ENCODE measurements at regions of chr6 and their contacts with region 1.

Region 1: GRCh38 chr6:26196846-26197648 is 109.8 kb downstream of the HFE start:
- DNase-seq: peak; percentile 86
- ATAC-seq: peak; percentile 43
- H3K4me3 Mint-ChIP-seq: peak overlapping the region; percentile 98
- H3K27ac Mint-ChIP-seq: peak overlapping the region; percentile 99
- H3K4me1 Mint-ChIP-seq: peaks cover 28% of the 10 kb centered on the region
- H3K27me3 Mint-ChIP-seq: no peaks in the 10 kb centered on the region

Region 2: GRCh38 chr6:26054857-26055669 is 142.0 kb before region 1 on chr6:
- CTCF ChIA-PET with region 1: no interaction called
- POLR2A ChIA-PET with region 1: interaction called, 14 read pairs
- intact Hi-C with region 1: loop called (anchors 2 to 5 kb)
- DNase-seq: peak; percentile 91
- ATAC-seq: peak; percentile 70
- H3K4me3 Mint-ChIP-seq: peak overlapping the region; percentile 96
- H3K27ac Mint-ChIP-seq: peak overlapping the region; percentile 99
- H3K4me1 Mint-ChIP-seq: peaks cover 13% of the 10 kb centered on the region
- H3K27me3 Mint-ChIP-seq: no peaks in the 10 kb centered on the region

Region 3: GRCh38 chr6:26149240-26149639 is 47.8 kb before region 1 on chr6:
- CTCF ChIA-PET with region 1: no interaction called
- POLR2A ChIA-PET with region 1: no interaction called
- intact Hi-C with region 1: no loop called
- DNase-seq: no peak
- ATAC-seq: no peak
- H3K4me3 Mint-ChIP-seq: no peak overlapping the region
- H3K27ac Mint-ChIP-seq: no peak overlapping the region
- H3K4me1 Mint-ChIP-seq: peaks cover 2% of the 10 kb centered on the region
- H3K27me3 Mint-ChIP-seq: no peaks in the 10 kb centered on the region

Region 4: DNA sequence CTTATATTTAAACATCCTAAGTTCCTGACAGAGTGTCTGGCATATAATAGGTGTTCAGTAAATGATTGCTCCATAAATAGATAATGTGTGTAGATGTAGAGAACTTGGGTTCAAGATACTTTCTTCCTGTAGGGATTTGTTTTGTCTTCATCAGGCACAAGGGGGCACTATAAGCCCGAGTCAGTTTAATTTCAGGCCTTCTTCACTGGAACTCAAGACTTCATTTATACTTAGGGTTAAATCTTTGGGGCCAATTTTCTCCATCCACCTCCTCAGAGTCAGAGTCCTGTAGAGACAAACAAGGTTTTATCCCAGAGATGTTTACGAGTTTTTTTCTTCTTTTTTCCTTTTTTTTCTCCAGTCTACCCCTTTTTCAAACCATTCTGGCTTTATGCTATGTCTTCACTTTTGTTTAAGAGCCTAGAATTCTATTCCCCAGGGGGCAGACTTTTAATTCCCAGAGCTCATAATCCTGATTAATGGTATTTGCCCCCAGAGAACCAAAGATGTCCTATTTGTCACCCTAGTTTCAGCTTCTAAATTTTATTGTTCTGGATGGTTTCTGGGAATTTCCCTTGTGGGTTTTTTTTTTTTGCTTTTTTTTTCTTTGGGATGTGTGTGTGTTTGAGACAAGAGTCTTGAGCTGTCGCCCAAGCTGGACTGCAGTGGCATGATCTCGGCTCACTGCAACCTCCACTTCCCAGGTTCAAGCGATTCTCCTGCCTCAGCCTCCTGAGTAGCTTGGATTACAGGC is 21.4 kb before region 1 on chr6:
- CTCF ChIA-PET with region 1: interaction called, 4 read pairs
- POLR2A ChIA-PET with region 1: interaction called, 47 read pairs
- intact Hi-C with region 1: loop called in 1 of 2 experiments (anchors 1 kb)
- DNase-seq: peak; percentile 69
- ATAC-seq: peak; percentile 14
- H3K4me3 Mint-ChIP-seq: peak overlapping the region; percentile 30
- H3K27ac Mint-ChIP-seq: peak overlapping the region; percentile 80
- H3K4me1 Mint-ChIP-seq: peaks cover 33% of the 10 kb centered on the region
- H3K27me3 Mint-ChIP-seq: no peaks in the 10 kb centered on the region

Region 5: GRCh38 chr6:26234421-26235296 is 37.6 kb after region 1 on chr6:
- CTCF ChIA-PET with region 1: interaction called, 4 read pairs
- POLR2A ChIA-PET with region 1: interaction called, 131 read pairs
- intact Hi-C with region 1: loop called (anchors 1 kb)
- DNase-seq: peak; percentile 81
- ATAC-seq: peak; percentile 73
- H3K4me3 Mint-ChIP-seq: peak overlapping the region; percentile 77
- H3K27ac Mint-ChIP-seq: peak overlapping the region; percentile 100
- H3K4me1 Mint-ChIP-seq: peaks cover 31% of the 10 kb centered on the region
- H3K27me3 Mint-ChIP-seq: peaks cover 2% of the 10 kb centered on the region

Region 6: DNA sequence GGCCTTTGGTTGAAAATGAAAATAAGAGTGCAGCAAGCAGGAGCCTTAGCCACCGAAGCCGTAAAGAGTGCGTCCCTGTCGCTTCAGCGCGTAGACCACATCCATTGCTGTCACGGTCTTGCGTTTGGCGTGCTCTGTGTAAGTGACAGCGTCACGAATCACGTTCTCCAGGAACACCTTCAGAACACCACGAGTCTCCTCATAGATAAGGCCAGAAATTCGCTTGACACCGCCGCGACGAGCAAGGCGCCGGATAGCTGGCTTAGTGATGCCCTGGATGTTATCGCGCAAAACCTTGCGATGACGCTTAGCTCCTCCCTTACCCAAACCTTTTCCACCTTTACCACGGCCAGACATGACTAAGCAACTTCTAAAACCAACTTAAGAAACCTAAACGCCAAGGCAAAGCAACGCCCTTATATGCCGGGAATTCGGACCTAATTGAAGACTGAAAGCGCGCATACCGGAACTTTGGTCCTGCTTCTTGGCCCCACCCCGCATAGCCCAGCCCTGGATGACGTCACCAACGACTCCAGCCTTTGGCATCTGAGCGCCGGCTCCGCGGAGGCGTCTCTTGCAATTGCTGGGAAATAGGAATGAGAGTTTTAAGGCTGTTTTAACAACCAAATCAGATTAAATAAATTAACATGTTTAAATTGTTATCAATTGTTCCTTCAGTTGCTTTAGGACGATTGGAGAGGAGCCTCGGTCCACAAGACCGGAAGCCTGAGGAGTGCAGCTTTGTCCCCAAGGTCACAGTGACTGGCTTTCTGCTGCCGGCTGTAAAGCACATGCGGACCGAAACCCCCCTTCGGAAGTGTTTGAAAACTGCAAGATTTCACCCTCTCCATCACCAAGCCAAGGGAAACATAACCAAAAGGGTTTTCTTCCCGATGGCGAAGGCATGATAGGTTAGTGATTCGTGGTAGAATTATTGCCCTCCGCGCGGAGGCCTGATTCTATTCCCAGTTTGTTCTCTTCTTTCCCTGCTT is 88.4 kb after region 1 on chr6:
- CTCF ChIA-PET with region 1: interaction called, 8 read pairs
- POLR2A ChIA-PET with region 1: interaction called, 6 read pairs
- intact Hi-C with region 1: loop called in 1 of 2 experiments (anchors 1 kb)
- DNase-seq: peak; percentile 98
- ATAC-seq: peak; percentile 80
- H3K4me3 Mint-ChIP-seq: peak overlapping the region; percentile 88
- H3K27ac Mint-ChIP-seq: peak overlapping the region; percentile 99
- H3K4me1 Mint-ChIP-seq: peaks cover 14% of the 10 kb centered on the region
- H3K27me3 Mint-ChIP-seq: peaks cover 3% of the 10 kb centered on the region

Region 7: DNA sequence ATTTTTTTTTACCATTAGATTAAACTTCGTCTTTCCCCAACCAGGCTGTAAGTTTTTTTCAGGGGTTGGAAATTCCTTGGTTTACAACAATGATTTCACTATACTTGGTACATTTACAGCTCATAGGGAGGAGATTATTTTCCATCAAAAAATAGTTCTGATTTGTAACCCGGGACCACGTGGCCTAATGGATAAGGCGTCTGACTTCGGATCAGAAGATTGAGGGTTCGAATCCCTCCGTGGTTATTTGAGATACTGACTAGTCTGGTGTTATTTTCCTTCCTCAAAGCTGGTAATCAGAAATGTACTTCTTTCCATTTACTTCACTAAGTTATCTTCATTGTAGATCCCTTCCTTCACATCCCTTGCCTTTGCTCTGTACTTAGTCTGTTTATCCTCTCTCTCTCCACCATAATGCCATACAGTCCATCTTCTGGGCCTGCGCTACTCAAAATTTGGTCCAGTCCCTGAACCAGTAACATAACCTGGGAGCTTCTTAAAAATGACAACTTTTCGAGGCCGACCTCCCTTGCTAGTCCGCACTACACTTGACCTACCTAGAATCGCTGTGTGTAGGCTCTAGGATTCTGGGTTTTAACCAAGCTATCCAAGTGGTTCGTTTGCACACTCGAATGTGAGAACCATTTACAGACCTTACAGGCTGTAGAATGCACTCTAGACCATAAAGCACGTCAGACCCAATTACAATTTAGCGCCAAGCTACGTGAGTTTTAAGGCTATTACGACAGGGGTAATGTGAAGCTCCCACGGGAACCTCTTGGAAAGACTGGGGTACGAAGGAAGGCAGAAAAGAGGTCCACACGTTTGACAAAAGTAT is 125.8 kb after region 1 on chr6:
- CTCF ChIA-PET with region 1: no interaction called
- POLR2A ChIA-PET with region 1: no interaction called
- intact Hi-C with region 1: no loop called
- DNase-seq: peak; percentile 77
- ATAC-seq: peak; percentile 66
- H3K4me3 Mint-ChIP-seq: peak overlapping the region; percentile 84
- H3K27ac Mint-ChIP-seq: peak overlapping the region; percentile 93
- H3K4me1 Mint-ChIP-seq: peaks cover 28% of the 10 kb centered on the region
- H3K27me3 Mint-ChIP-seq: peaks cover 5% of the 10 kb centered on the region

Region 8: DNA sequence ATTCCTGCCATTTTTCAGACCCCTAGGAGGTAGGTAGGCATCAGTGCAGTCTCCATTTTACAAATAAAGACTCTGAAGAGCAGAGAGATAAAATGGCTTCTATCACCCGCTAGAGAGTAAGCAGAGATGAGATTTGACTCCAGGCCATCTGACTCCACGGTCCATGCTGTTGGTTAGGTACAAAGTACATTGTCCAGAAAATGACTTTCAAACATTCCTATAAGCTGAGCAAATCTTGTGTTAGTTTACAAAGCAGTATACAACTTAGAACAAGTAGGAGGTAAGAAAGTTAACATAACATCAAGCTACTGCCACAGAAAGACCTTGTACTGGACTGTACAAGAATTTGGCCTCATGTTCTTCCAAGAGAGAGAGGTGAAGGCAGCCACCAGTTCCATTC is 317.9 kb after region 1 on chr6:
- CTCF ChIA-PET with region 1: no interaction called
- POLR2A ChIA-PET with region 1: no interaction called
- intact Hi-C with region 1: no loop called
- DNase-seq: no peak
- ATAC-seq: no peak
- H3K4me3 Mint-ChIP-seq: no peak overlapping the region
- H3K27ac Mint-ChIP-seq: no peak overlapping the region
- H3K4me1 Mint-ChIP-seq: peaks cover 2% of the 10 kb centered on the region
- H3K27me3 Mint-ChIP-seq: no peaks in the 10 kb centered on the region

Region 9: GRCh38 chr6:27864906-27865849 is 1668.1 kb after region 1 on chr6:
- CTCF ChIA-PET with region 1: no interaction called
- POLR2A ChIA-PET with region 1: no interaction called
- intact Hi-C with region 1: loop called in 1 of 2 experiments (anchors 2 kb)
- DNase-seq: peak; percentile 86
- ATAC-seq: peak; percentile 57
- H3K4me3 Mint-ChIP-seq: peak overlapping the region; percentile 94
- H3K27ac Mint-ChIP-seq: peak overlapping the region; percentile 99
- H3K4me1 Mint-ChIP-seq: peaks cover 40% of the 10 kb centered on the region
- H3K27me3 Mint-ChIP-seq: no peaks in the 10 kb centered on the region

Measured in activated CD4-positive, alpha-beta T cell treated with anti-CD3 and anti-CD28 coated beads for 36 hours (primary cell).